Transverse colon (tissue), 4 donors: ENCODE measurements at regions of chr14 and their contacts with region 1.

Region 1: DNA sequence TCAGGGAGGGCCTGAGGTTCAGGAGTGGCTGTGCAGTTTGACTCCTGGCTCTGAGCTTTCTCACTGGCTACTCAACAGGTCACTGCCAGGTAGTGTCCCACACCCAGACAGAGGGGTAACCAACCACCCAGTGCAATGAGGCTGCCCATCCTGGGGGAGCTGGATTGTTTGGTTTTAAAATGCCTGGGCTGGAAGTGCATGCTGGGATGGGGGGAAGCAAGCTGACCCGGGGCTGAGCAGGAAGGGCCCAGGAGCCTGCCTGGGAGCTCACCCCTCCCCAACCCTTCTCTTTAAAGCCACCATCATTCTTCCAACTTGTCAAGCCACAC is 12.6 kb upstream of the ABHD12B start:
- DNase-seq: no peak
- H3K4me3 ChIP-seq: peak overlapping the region in 1 of 4 donors; percentile 57
- H3K27ac ChIP-seq: peak overlapping the region in 3 of 4 donors; percentile 8 to 58 (median 34)
- H3K4me1 ChIP-seq: peaks cover 0 to 10% (median 9%) of the 10 kb centered on the region in 4 donors
- H3K27me3 ChIP-seq: no peaks in the 10 kb centered on the region
- CTCF ChIP-seq: no peak
- EP300 ChIP-seq: no peak
- POLR2A ChIP-seq: no peak

Region 2: GRCh38 chr14:50542941-50543418 is 316.3 kb before region 1 on chr14:
- in situ Hi-C with region 1: no loop called
- intact Hi-C with region 1: no loop called
- DNase-seq: peak; percentile 20
- H3K4me3 ChIP-seq: no peak overlapping the region
- H3K27ac ChIP-seq: no peak overlapping the region
- H3K4me1 ChIP-seq: no peaks in the 10 kb centered on the region
- H3K27me3 ChIP-seq: no peaks in the 10 kb centered on the region
- CTCF ChIP-seq: peak; percentile 35 to 58 (median 53)
- EP300 ChIP-seq: no peak
- POLR2A ChIP-seq: no peak

Region 3: DNA sequence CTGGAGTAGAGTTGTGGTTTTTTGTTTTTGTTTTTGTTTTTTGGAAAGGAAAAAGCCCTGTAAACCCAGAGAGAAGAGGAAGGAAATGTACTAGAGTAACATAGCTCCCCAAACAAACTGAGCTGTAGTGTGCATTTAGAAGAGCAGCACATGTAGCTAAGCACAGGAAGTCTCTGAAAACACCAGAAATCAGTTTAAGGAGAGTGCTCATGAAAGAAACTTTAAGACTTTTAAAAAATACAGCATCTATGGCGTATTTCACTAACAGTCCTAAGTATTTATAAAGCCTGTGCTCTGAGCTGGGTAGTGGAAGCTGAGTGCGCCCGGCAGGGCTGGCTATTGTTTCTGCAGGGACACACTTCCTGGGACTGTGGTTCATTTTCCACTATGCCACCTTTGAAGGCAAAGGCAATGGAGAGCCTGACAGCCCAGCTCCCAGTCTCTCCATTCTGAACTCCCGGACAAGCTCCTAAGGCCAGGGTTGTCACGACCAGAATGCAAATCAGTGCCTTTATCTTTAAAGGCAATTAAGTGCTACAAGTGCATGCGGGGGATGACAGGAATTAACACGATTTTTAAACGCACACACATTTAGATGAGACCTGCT is 73.7 kb before region 1 on chr14:
- in situ Hi-C with region 1: loop called in 1 of 4 experiments (anchors 10 kb)
- intact Hi-C with region 1: no loop called
- DNase-seq: no peak
- H3K4me3 ChIP-seq: no peak overlapping the region
- H3K27ac ChIP-seq: peak overlapping the region in 2 of 4 donors; percentile 0 to 31
- H3K4me1 ChIP-seq: no peaks in the 10 kb centered on the region
- H3K27me3 ChIP-seq: no peaks in the 10 kb centered on the region
- CTCF ChIP-seq: no peak
- EP300 ChIP-seq: no peak
- POLR2A ChIP-seq: no peak